MCF 10A (cell line): ENCODE measurements at regions of chr10 and their contacts with region 1.

Region 1: DNA sequence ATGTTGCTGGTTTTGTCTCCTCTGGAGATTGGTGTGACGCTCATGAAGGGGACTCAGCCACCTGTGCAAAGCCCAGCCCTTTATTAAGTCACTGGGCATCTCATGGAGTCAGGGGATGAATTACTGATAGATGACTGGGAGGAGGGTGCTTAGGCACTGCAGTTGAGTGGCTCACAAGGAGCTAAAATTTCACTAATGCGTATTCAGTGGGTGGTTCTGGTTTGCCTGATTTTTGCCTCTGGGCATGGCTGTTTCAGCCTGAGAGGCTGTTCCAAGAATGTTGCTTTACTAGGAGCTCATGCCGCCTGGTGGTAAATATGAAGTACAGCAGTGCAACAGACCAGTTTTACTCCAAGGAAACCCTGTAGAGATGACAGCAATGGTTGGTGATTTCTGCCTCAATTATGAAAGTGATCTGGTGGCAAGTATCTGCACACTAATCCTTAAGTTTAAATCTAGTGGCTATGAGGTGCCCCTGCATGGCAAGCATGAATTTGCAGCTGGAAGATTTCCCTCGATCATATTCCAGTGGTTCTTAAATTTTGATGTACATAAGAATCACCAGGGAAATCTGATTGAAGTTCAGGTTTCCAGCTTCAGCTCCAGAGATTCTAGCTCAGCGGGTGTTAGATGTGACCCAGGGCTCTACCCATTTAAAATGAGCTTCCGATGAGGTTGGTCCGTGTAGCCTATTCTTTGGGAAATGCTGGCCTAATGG is 19.9 kb downstream of the ACTA2 start:
- DNase-seq: peak; percentile 91
- H3K4me3 Mint-ChIP-seq: no peak overlapping the region
- H3K27ac Mint-ChIP-seq: peak overlapping the region; percentile 64
- H3K4me1 Mint-ChIP-seq: peaks cover 25% of the 10 kb centered on the region
- H3K27me3 Mint-ChIP-seq: no peaks in the 10 kb centered on the region
- CTCF ChIP-seq: peak; percentile 77

Region 2: DNA sequence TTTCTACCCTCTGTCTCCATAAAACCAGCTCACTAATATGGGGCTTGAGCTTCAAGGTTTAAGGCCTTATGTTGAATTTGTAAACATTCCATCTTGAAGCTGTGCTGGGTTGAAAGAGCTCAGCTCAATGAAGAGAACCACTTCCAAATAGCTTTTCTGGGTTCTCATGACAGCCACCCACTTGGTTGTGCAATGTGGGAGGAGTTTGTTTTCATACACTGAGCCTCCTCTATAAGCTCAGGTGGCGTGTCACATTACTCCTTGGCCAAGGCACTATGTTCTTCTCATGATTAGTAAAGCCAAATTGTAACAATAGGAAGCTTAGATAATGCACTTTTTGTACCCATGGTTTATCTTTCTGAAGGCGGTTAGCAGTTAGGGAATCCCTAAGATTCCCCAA is 803.7 kb before region 1 on chr10:
- CTCF ChIA-PET with region 1: no interaction called
- POLR2A ChIA-PET with region 1: no interaction called
- intact Hi-C with region 1: no loop called
- DNase-seq: peak; percentile 64
- H3K4me3 Mint-ChIP-seq: no peak overlapping the region
- H3K27ac Mint-ChIP-seq: no peak overlapping the region
- H3K4me1 Mint-ChIP-seq: peaks cover 27% of the 10 kb centered on the region
- H3K27me3 Mint-ChIP-seq: no peaks in the 10 kb centered on the region
- CTCF ChIP-seq: no peak

Region 3: GRCh38 chr10:88810196-88810961 is 122.3 kb before region 1 on chr10:
- CTCF ChIA-PET with region 1: interaction called, 11 read pairs
- POLR2A ChIA-PET with region 1: no interaction called
- intact Hi-C with region 1: no loop called
- DNase-seq: peak; percentile 74
- H3K4me3 Mint-ChIP-seq: no peak overlapping the region
- H3K27ac Mint-ChIP-seq: no peak overlapping the region
- H3K4me1 Mint-ChIP-seq: peaks cover 8% of the 10 kb centered on the region
- H3K27me3 Mint-ChIP-seq: no peaks in the 10 kb centered on the region
- CTCF ChIP-seq: peak; percentile 60

Region 4: GRCh38 chr10:88874281-88874680 is 58.4 kb before region 1 on chr10:
- CTCF ChIA-PET with region 1: interaction called, 10 read pairs
- POLR2A ChIA-PET with region 1: interaction called, 23 read pairs
- intact Hi-C with region 1: no loop called
- DNase-seq: no peak
- H3K4me3 Mint-ChIP-seq: no peak overlapping the region
- H3K27ac Mint-ChIP-seq: no peak overlapping the region
- H3K4me1 Mint-ChIP-seq: peaks cover under 1% of the 10 kb centered on the region
- H3K27me3 Mint-ChIP-seq: no peaks in the 10 kb centered on the region
- CTCF ChIP-seq: no peak

Region 5: GRCh38 chr10:88908194-88908593 is 24.5 kb before region 1 on chr10:
- CTCF ChIA-PET with region 1: interaction called, 18 read pairs
- POLR2A ChIA-PET with region 1: interaction called, 4 read pairs
- intact Hi-C with region 1: no loop called
- DNase-seq: no peak
- H3K4me3 Mint-ChIP-seq: no peak overlapping the region
- H3K27ac Mint-ChIP-seq: no peak overlapping the region
- H3K4me1 Mint-ChIP-seq: no peaks in the 10 kb centered on the region
- H3K27me3 Mint-ChIP-seq: no peaks in the 10 kb centered on the region
- CTCF ChIP-seq: no peak

Region 6: DNA sequence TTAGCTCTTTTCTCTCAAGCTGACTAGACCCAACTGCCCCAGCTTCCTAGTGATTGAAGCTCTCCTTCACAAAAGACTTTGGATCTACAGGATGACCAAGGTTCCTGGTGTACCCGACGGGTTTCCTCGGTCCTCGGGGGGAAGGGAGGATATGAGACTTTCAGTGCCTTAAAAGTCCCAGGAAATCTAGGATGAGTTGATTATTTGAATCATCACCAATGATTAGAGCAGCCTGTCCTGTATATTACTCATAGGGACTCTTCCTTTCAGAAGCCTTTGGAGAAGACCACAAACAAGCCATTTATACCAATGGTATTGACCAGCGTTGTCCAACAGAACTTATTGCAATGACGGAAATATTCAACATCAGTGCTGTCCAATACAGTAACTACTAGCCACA is 26.0 kb after region 1 on chr10:
- CTCF ChIA-PET with region 1: interaction called, 12 read pairs
- POLR2A ChIA-PET with region 1: no interaction called
- intact Hi-C with region 1: no loop called
- DNase-seq: no peak
- H3K4me3 Mint-ChIP-seq: no peak overlapping the region
- H3K27ac Mint-ChIP-seq: no peak overlapping the region
- H3K4me1 Mint-ChIP-seq: no peaks in the 10 kb centered on the region
- H3K27me3 Mint-ChIP-seq: no peaks in the 10 kb centered on the region
- CTCF ChIP-seq: no peak

Region 7: DNA sequence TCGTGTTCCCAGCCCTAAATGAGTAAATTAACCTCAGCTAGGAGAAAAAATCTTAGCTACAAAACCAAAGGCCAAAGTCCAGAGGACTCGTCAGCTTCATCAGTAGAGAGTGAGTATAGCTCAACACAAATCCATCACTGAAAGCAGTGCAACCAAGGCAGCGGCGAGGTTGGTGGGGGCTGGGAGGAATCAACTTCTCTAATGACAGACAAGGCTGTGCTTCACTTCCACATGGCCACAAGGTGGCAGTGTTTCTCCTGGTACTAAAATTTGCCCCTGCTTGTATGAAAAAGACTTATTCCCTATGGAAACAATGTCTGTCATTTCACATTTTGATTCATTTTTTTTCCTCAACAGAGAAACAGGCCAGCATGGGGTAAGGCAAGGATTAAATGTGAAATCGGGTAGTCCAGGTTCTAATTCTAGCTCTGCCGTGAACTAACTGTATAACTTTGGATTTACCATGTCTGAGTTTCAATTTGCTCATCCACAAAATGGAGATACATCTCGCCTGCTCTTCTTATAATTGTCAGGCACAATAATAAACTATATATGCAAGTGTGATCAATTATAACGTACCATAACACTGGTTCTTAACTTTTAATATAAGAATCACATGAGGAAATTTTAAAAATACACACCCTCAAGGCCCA is 97.2 kb after region 1 on chr10:
- CTCF ChIA-PET with region 1: interaction called, 5 read pairs
- POLR2A ChIA-PET with region 1: no interaction called
- intact Hi-C with region 1: loop called (anchors 1 kb)
- DNase-seq: peak; percentile 81
- H3K4me3 Mint-ChIP-seq: no peak overlapping the region
- H3K27ac Mint-ChIP-seq: no peak overlapping the region
- H3K4me1 Mint-ChIP-seq: peaks cover 30% of the 10 kb centered on the region
- H3K27me3 Mint-ChIP-seq: no peaks in the 10 kb centered on the region
- CTCF ChIP-seq: peak; percentile 79

Region 8: DNA sequence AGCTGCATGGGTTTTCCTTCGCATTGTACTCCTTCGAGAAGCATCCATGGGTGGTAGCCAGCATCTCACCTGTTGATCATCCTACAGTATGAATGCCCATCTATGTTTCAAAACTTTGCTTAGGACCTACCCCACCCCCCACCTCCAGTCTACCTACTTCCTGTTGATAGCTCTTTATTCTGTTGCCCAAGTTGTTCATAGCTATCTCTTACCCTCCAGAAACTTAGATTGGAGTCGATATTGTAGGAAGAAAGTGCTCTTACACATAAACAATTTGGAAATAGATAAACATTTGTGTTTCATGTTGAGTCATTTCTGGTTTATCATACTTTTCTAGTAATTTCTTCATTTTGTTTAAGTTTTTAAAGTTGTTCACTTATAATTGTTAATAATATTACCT is 148.0 kb after region 1 on chr10:
- CTCF ChIA-PET with region 1: no interaction called
- POLR2A ChIA-PET with region 1: no interaction called
- intact Hi-C with region 1: no loop called
- DNase-seq: no peak
- H3K4me3 Mint-ChIP-seq: no peak overlapping the region
- H3K27ac Mint-ChIP-seq: no peak overlapping the region
- H3K4me1 Mint-ChIP-seq: no peaks in the 10 kb centered on the region
- H3K27me3 Mint-ChIP-seq: no peaks in the 10 kb centered on the region
- CTCF ChIP-seq: no peak

Region 9: DNA sequence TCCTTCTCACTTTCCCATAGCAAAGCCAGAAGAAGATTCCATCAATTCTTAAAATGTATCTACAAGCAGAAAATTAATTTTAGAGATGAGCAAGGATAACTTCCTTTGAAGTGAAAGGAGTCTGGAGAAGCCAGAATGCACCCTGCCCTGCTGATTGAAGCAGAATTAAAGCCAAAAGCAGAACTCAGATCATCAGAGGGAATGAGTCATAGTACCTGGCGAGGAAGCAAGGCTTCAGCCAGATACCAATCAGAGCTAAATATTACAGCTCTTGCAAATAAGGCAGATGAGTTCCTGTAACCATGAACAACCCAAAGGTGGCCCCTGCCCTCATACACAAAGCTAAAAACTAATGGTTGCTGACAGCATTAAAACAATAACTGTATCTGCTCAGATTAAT is 1914.7 kb after region 1 on chr10:
- CTCF ChIA-PET with region 1: no interaction called
- POLR2A ChIA-PET with region 1: no interaction called
- intact Hi-C with region 1: no loop called
- DNase-seq: peak; percentile 82
- H3K4me3 Mint-ChIP-seq: peak overlapping the region; percentile 33
- H3K27ac Mint-ChIP-seq: peak overlapping the region; percentile 80
- H3K4me1 Mint-ChIP-seq: peaks cover 35% of the 10 kb centered on the region
- H3K27me3 Mint-ChIP-seq: no peaks in the 10 kb centered on the region
- CTCF ChIP-seq: no peak